Endothelial cell of umbilical vein (primary cell): ENCODE measurements at regions of chr6 and their contacts with region 1.

Region 1: DNA sequence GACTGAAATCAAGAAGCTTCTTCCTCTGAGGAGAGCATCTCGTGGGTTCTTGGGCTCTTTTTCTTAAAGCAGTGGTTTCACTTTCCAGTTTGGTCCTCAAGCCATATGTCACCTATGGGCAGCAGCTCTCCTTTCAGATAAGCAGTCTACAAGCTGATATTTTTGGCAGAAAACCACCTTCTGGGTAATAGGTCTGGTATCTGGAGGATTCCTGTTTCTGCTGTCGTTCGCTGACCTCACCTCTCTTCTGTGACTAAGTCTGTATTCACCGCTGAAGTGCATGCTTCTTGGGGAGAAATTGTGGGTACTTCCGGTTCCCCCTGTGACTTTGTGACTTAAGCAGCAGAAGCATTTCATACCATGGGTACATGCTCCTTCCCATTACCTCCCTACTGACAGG is 193.6 kb downstream of the EDN1 start:
- DNase-seq: peak; percentile 90
- H3K4me3 ChIP-seq: peak overlapping the region in 1 of 3 experiments; percentile 9
- H3K27ac ChIP-seq: peak overlapping the region; percentile 74
- H3K4me1 ChIP-seq: peaks cover 54% of the 10 kb centered on the region
- H3K27me3 ChIP-seq: no peaks in the 10 kb centered on the region
- CTCF ChIP-seq: no peak
- POLR2A ChIP-seq: peak; percentile 56

Region 2: GRCh38 chr6:11609315-11610071 is 874.2 kb before region 1 on chr6:
- CTCF ChIA-PET with region 1: no interaction called
- POLR2A ChIA-PET with region 1: no interaction called
- dilution Hi-C with region 1: no loop called
- intact Hi-C with region 1: loop called (anchors 2 kb)
- DNase-seq: peak; percentile 99
- H3K4me3 ChIP-seq: peak overlapping the region in 2 of 3 experiments; percentile 30 to 86
- H3K27ac ChIP-seq: peak overlapping the region; percentile 99
- H3K4me1 ChIP-seq: peaks cover 78% of the 10 kb centered on the region
- H3K27me3 ChIP-seq: no peaks in the 10 kb centered on the region
- CTCF ChIP-seq: no peak
- POLR2A ChIP-seq: no peak

Region 3: GRCh38 chr6:12296255-12296573 is 187.5 kb before region 1 on chr6:
- CTCF ChIA-PET with region 1: interaction called, 41 read pairs
- POLR2A ChIA-PET with region 1: interaction called, 37 read pairs
- dilution Hi-C with region 1: loop called (anchors 25 kb)
- intact Hi-C with region 1: loop called (anchors 2 kb)
- DNase-seq: peak; percentile 53
- H3K4me3 ChIP-seq: peak overlapping the region in 2 of 3 experiments; percentile 91 to 96
- H3K27ac ChIP-seq: peak overlapping the region; percentile 98
- H3K4me1 ChIP-seq: peaks cover 30% of the 10 kb centered on the region
- H3K27me3 ChIP-seq: no peaks in the 10 kb centered on the region
- CTCF ChIP-seq: no peak
- POLR2A ChIP-seq: no peak

Region 4: GRCh38 chr6:12324514-12325147 is 159.1 kb before region 1 on chr6:
- CTCF ChIA-PET with region 1: interaction called, 3 read pairs
- POLR2A ChIA-PET with region 1: no interaction called
- dilution Hi-C with region 1: no loop called
- intact Hi-C with region 1: loop called (anchors 1 kb)
- DNase-seq: no peak
- H3K4me3 ChIP-seq: no peak overlapping the region
- H3K27ac ChIP-seq: peak overlapping the region; percentile 60
- H3K4me1 ChIP-seq: peaks cover 17% of the 10 kb centered on the region
- H3K27me3 ChIP-seq: no peaks in the 10 kb centered on the region
- CTCF ChIP-seq: no peak
- POLR2A ChIP-seq: peak; percentile 40

Region 5: DNA sequence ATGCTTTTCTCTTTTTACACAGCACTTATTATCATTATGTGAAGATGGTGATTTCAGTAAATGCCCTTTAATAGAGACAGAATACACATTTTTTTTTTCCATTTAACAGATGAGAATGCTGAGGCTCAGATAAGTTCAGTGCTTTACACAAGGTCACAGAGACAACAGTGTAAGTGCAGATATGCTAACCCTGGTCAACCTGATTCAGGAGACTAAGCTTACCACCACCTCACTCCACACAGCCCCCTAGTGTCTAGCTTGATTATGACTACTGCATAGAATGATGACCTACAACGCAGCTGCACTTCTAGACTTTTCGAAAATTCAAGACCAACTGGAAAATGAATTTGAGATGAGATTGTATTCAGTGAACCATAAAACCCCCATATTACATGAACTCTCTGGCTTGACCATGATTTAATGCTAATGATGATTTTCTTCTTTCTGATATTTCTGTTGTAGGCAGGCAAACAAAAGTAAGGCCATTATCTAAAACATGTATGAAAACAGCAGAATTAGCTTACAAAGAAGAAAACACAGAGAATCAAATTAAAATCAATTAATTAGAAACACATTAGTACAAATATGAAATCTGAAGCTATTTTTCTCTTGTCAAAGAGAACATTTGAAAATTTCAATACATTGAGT is 20.7 kb after region 1 on chr6:
- CTCF ChIA-PET with region 1: interaction called, 30 read pairs
- POLR2A ChIA-PET with region 1: no interaction called
- dilution Hi-C with region 1: no loop called
- intact Hi-C with region 1: no loop called
- DNase-seq: no peak
- H3K4me3 ChIP-seq: no peak overlapping the region
- H3K27ac ChIP-seq: no peak overlapping the region
- H3K4me1 ChIP-seq: no peaks in the 10 kb centered on the region
- H3K27me3 ChIP-seq: no peaks in the 10 kb centered on the region
- CTCF ChIP-seq: peak; percentile 25 to 46
- POLR2A ChIP-seq: no peak

Region 6: GRCh38 chr6:12595161-12595811 is 111.6 kb after region 1 on chr6:
- CTCF ChIA-PET with region 1: interaction called, 6 read pairs
- POLR2A ChIA-PET with region 1: interaction called, 3 read pairs
- dilution Hi-C with region 1: loop called (anchors 25 kb)
- intact Hi-C with region 1: no loop called
- DNase-seq: peak; percentile 58
- H3K4me3 ChIP-seq: no peak overlapping the region
- H3K27ac ChIP-seq: peak overlapping the region; percentile 36
- H3K4me1 ChIP-seq: peaks cover 9% of the 10 kb centered on the region
- H3K27me3 ChIP-seq: no peaks in the 10 kb centered on the region
- CTCF ChIP-seq: no peak
- POLR2A ChIP-seq: no peak

Region 7: GRCh38 chr6:12621754-12622153 is 138.0 kb after region 1 on chr6:
- CTCF ChIA-PET with region 1: no interaction called
- POLR2A ChIA-PET with region 1: no interaction called
- dilution Hi-C with region 1: no loop called
- intact Hi-C with region 1: no loop called
- DNase-seq: no peak
- H3K4me3 ChIP-seq: no peak overlapping the region
- H3K27ac ChIP-seq: no peak overlapping the region
- H3K4me1 ChIP-seq: no peaks in the 10 kb centered on the region
- H3K27me3 ChIP-seq: peaks cover 2 to 8% of the 10 kb centered on the region in 2 experiments
- CTCF ChIP-seq: no peak
- POLR2A ChIP-seq: no peak